ENCODE measurements at regions of chr19 and their contacts with region 1.

Region 1: DNA sequence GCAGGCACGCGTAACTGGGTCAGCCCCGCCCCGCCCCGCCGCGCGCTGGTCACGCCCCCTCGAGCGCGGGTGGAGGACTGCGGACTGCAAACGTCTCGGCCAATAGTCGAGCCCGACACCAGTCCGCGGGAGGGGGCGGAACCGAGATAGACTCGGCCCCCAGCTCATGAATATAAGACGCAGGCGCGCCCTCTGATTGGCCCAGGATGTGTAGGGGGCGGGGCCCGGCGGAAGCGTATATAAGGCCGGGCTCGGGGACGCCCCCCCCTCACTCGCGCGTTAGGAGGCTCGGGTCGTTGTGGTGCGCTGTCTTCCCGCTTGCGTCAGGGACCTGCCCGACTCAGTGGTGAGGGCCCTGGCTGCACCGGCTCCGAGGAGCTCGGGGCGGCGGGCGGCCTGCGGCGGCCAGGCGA is at the start of gene CIRBP:
- DNase-seq: peak; percentile 98 to 100 (median 99)
- ATAC-seq: peak; percentile 81
- H3K4me3 ChIP-seq: peak within 1 kb of the TSS; percentile 99
- H3K4me3 Mint-ChIP-seq: peak within 1 kb of the TSS; percentile 94
- H3K27ac ChIP-seq: peak within 1 kb of the TSS; percentile 78 to 84
- H3K27ac Mint-ChIP-seq: peak within 1 kb of the TSS; percentile 88
- H3K4me1 ChIP-seq: peaks cover 86% of the 10 kb centered on the region
- H3K4me1 Mint-ChIP-seq: peaks cover 68% of the 10 kb centered on the region
- H3K27me3 ChIP-seq: no peaks in the 10 kb centered on the region
- H3K27me3 Mint-ChIP-seq: no peaks in the 10 kb centered on the region
- CTCF ChIP-seq: no peak
- total RNA-seq, gene CIRBP: 614 to 628 TPM

Region 2: DNA sequence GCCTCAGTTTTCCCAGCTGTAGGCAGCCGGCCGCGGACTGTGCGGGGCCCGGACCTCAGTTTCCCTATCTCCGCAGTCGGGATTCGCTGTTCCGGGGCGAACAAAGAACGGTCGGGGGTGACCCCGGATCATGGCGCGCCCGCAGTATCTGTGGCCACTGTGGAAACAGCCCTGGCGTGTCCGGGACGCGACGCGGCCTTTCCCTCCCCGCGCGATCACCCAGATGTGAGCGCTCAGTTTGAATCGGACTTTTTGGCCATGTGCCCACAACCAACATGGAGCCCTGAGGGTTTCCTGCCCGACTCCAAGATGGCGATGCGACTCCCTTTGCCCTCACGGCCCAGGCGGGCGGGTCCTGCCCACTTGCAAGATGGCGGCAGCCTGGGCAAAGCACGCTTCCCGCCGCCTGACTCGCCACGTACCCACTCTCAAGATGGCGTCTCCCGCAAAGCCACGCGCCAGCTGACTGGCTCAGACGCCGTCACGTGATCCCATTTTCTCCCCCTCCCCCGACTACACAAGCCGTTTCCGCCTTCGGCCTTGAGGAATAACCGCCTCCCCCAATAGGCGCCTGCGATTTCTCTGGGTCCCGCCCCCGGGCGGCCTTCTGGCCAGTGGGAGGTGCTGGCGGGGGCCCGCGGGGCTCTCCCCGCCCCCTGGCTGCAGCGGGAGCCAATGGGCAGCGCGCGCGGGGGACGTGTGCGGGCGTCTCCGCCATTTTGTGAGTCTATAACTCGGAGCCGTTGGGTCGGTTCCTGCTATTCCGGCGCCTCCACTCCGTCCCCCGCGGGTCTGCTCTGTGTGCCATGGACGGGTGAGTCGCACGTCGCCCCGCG is 472.2 kb before region 1 on chr19 and contains the start of gene PTBP1:
- CTCF ChIA-PET with region 1: no interaction called
- POLR2A ChIA-PET with region 1: interaction called, 11 read pairs
- intact Hi-C with region 1: no loop called
- DNase-seq: peak; percentile 97 to 100 (median 99)
- ATAC-seq: peak; percentile 83
- H3K4me3 ChIP-seq: peak within 1 kb of the TSS; percentile 87
- H3K4me3 Mint-ChIP-seq: peak within 1 kb of the TSS; percentile 89
- H3K27ac ChIP-seq: peak within 1 kb of the TSS; percentile 67 to 72
- H3K27ac Mint-ChIP-seq: peak within 1 kb of the TSS; percentile 87
- H3K4me1 ChIP-seq: peaks cover 48% of the 10 kb centered on the region
- H3K4me1 Mint-ChIP-seq: peaks cover 36% of the 10 kb centered on the region
- H3K27me3 ChIP-seq: no peaks in the 10 kb centered on the region
- H3K27me3 Mint-ChIP-seq: no peaks in the 10 kb centered on the region
- CTCF ChIP-seq: no peak
- total RNA-seq, gene PTBP1: 246 to 252 TPM

Region 3: GRCh38 chr19:1020868-1021425 is 248.1 kb before region 1 on chr19 and contains the start of gene TMEM259:
- CTCF ChIA-PET with region 1: no interaction called
- POLR2A ChIA-PET with region 1: interaction called, 29 read pairs
- intact Hi-C with region 1: no loop called
- DNase-seq: peak; percentile 94 to 99 (median 98)
- ATAC-seq: peak; percentile 84
- H3K4me3 ChIP-seq: peak within 1 kb of the TSS; percentile 94
- H3K4me3 Mint-ChIP-seq: peak within 1 kb of the TSS; percentile 98
- H3K27ac ChIP-seq: peak within 1 kb of the TSS; percentile 96 to 99
- H3K27ac Mint-ChIP-seq: peak within 1 kb of the TSS; percentile 99
- H3K4me1 ChIP-seq: peaks cover 66% of the 10 kb centered on the region
- H3K4me1 Mint-ChIP-seq: peaks cover 33% of the 10 kb centered on the region
- H3K27me3 ChIP-seq: no peaks in the 10 kb centered on the region
- H3K27me3 Mint-ChIP-seq: peaks cover 7% of the 10 kb centered on the region
- CTCF ChIP-seq: no peak
- total RNA-seq, gene TMEM259: 388 to 390 TPM

Region 4: GRCh38 chr19:1064661-1065605 is 204.1 kb before region 1 on chr19:
- CTCF ChIA-PET with region 1: no interaction called
- POLR2A ChIA-PET with region 1: interaction called, 57 read pairs
- intact Hi-C with region 1: no loop called
- DNase-seq: peak in 12 of 14 experiments; percentile 53 to 90 (median 70)
- ATAC-seq: peak; percentile 37
- H3K4me3 ChIP-seq: no peak overlapping the region
- H3K4me3 Mint-ChIP-seq: peak overlapping the region; percentile 90
- H3K27ac ChIP-seq: peak overlapping the region in 1 of 2 donors; percentile 98
- H3K27ac Mint-ChIP-seq: peak overlapping the region; percentile 96
- H3K4me1 ChIP-seq: peaks cover 62% of the 10 kb centered on the region
- H3K4me1 Mint-ChIP-seq: peaks cover 54% of the 10 kb centered on the region
- H3K27me3 ChIP-seq: no peaks in the 10 kb centered on the region
- H3K27me3 Mint-ChIP-seq: no peaks in the 10 kb centered on the region
- CTCF ChIP-seq: peak; percentile 78

Region 5: GRCh38 chr19:1131738-1132551 is 137.1 kb before region 1 on chr19:
- CTCF ChIA-PET with region 1: no interaction called
- POLR2A ChIA-PET with region 1: interaction called, 27 read pairs
- intact Hi-C with region 1: no loop called
- DNase-seq: peak; percentile 62 to 94 (median 88)
- ATAC-seq: peak; percentile 69
- H3K4me3 ChIP-seq: peak overlapping the region; percentile 95
- H3K4me3 Mint-ChIP-seq: peak overlapping the region; percentile 90
- H3K27ac ChIP-seq: peak overlapping the region; percentile 87 to 92
- H3K27ac Mint-ChIP-seq: peak overlapping the region; percentile 96
- H3K4me1 ChIP-seq: peaks cover 90% of the 10 kb centered on the region
- H3K4me1 Mint-ChIP-seq: peaks cover 36% of the 10 kb centered on the region
- H3K27me3 ChIP-seq: no peaks in the 10 kb centered on the region
- H3K27me3 Mint-ChIP-seq: no peaks in the 10 kb centered on the region
- CTCF ChIP-seq: no peak

Region 6: DNA sequence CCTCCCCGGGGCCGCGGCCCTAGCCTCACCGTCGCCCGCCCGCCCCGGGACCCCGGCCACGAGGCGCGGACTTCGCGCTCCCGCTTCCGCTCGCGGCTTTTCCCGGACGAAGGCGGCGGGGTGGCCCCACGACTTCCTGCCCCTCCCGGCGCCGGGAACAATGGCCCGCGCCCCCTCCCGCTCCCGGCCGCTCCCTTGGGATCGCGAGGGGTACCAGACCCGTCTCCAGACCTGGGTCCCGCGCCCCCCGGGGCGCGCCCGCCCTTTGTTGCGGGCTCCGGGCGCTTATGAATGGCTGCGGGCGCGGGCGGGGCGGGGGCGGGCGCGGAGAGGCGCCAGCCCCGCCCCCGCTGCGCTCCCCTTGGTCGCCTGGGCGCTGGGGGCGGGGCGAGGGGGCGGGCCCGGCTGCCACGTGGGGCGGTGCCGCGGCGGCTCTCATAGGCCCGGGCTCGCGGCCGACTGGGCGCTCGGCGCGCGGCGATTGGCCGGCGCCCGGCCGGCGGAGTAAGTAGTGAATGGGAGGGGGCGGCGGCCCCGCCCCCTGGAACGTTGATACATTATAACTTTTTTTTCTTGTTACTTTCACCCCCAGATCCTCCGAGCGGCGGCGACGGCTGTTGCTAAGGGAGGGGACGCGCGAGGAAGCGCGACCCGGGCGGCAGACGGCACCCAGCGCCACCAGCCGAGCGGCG is 19.6 kb before region 1 on chr19:
- CTCF ChIA-PET with region 1: interaction called, 255 read pairs
- POLR2A ChIA-PET with region 1: interaction called, 476 read pairs
- intact Hi-C with region 1: loop called (anchors 1 kb)
- DNase-seq: peak; percentile 90 to 99 (median 96)
- ATAC-seq: peak; percentile 55
- H3K4me3 ChIP-seq: peak overlapping the region; percentile 71
- H3K4me3 Mint-ChIP-seq: peak overlapping the region; percentile 97
- H3K27ac ChIP-seq: peak overlapping the region; percentile 69 to 86
- H3K27ac Mint-ChIP-seq: peak overlapping the region; percentile 92
- H3K4me1 ChIP-seq: peaks cover 55% of the 10 kb centered on the region
- H3K4me1 Mint-ChIP-seq: peaks cover 10% of the 10 kb centered on the region
- H3K27me3 ChIP-seq: no peaks in the 10 kb centered on the region
- H3K27me3 Mint-ChIP-seq: no peaks in the 10 kb centered on the region
- CTCF ChIP-seq: no peak

Region 7: GRCh38 chr19:1324806-1325567 is 55.9 kb after region 1 on chr19:
- CTCF ChIA-PET with region 1: no interaction called
- POLR2A ChIA-PET with region 1: no interaction called
- intact Hi-C with region 1: no loop called
- DNase-seq: peak in 7 of 14 experiments; percentile 4 to 49 (median 31)
- ATAC-seq: peak; percentile 34
- H3K4me3 ChIP-seq: peak overlapping the region; percentile 16
- H3K4me3 Mint-ChIP-seq: no peak overlapping the region
- H3K27ac ChIP-seq: no peak overlapping the region
- H3K27ac Mint-ChIP-seq: no peak overlapping the region
- H3K4me1 ChIP-seq: peaks cover 11% of the 10 kb centered on the region
- H3K4me1 Mint-ChIP-seq: no peaks in the 10 kb centered on the region
- H3K27me3 ChIP-seq: peaks cover 24 to 28% of the 10 kb centered on the region in 2 experiments
- H3K27me3 Mint-ChIP-seq: peaks cover 30% of the 10 kb centered on the region
- CTCF ChIP-seq: no peak

Region 8: GRCh38 chr19:1406774-1407499 is 137.9 kb after region 1 on chr19:
- CTCF ChIA-PET with region 1: interaction called, 3 read pairs
- POLR2A ChIA-PET with region 1: interaction called, 11 read pairs
- intact Hi-C with region 1: loop called in 1 of 2 experiments (anchors 10 kb)
- DNase-seq: peak; percentile 98 to 100 (median 99)
- ATAC-seq: peak; percentile 79
- H3K4me3 ChIP-seq: peak overlapping the region; percentile 51
- H3K4me3 Mint-ChIP-seq: peak overlapping the region; percentile 92
- H3K27ac ChIP-seq: peak overlapping the region; percentile 52 to 73
- H3K27ac Mint-ChIP-seq: peak overlapping the region; percentile 78
- H3K4me1 ChIP-seq: peaks cover 56% of the 10 kb centered on the region
- H3K4me1 Mint-ChIP-seq: peaks cover 46% of the 10 kb centered on the region
- H3K27me3 ChIP-seq: peaks cover 0 to 11% of the 10 kb centered on the region in 2 experiments
- H3K27me3 Mint-ChIP-seq: no peaks in the 10 kb centered on the region
- CTCF ChIP-seq: peak; percentile 62

Measured in CD4-positive, alpha-beta T cell (primary cell).